Heart right ventricle (tissue), 16 donors: ENCODE measurements at regions of chr20 and their contacts with region 1.

Region 1: DNA sequence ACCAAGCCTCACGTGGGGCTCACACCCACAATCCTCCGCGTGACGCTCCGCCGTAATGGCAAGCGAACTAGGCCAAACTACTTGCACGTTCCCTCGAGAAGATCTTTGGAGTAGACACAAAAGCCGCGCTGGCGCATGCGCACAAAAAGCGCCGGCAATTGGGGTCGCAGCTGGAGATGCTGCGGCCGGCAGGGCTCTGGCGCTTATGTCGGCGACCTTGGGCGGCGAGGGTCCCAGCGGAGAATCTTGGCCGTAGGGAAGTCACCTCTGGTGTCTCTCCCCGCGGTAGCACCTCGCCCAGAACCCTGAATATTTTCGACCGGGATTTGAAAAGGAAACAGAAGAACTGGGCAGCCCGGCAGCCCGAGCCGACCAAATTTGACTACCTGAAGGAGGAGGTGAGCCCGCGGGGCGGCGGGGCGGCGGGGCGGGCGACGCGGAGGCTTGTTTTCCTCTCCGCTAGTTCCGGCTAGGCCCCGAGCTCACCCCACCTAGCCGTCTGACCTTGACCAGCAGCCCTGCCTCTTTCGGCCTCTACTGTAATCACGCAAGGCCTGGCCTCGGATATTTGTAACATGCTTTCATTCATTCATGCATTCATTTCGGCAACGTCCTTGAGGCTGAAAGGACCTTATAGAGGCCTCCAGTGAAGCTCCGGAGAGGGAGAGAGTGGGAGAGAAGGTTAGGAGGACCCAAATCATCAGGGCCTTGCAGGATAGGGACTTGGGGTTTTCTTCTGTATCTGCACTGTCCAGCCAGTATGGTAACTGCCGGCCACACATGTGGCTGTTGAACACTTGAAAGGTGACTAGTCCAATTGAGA is at the starts of genes ESF1 and NDUFAF5:
- DNase-seq: peak; percentile 92 to 95
- ATAC-seq: peak; percentile 98 to 99 (median 99)
- H3K4me3 ChIP-seq: peak within 1 kb of the TSS; percentile 50 to 98 (median 88)
- H3K27ac ChIP-seq: peak within 1 kb of the TSS; percentile 73 to 98 (median 94)
- H3K4me1 ChIP-seq: peaks cover 0 to 46% (median 39%) of the 10 kb centered on the region in 9 donors
- H3K27me3 ChIP-seq: no peaks in the 10 kb centered on the region
- CTCF ChIP-seq: no peak
- total RNA-seq, gene ESF1: 9.9 to 16.4 (median 13.5) TPM
- total RNA-seq, gene NDUFAF5: 47.4 to 83.4 (median 66.3) TPM

Region 2: DNA sequence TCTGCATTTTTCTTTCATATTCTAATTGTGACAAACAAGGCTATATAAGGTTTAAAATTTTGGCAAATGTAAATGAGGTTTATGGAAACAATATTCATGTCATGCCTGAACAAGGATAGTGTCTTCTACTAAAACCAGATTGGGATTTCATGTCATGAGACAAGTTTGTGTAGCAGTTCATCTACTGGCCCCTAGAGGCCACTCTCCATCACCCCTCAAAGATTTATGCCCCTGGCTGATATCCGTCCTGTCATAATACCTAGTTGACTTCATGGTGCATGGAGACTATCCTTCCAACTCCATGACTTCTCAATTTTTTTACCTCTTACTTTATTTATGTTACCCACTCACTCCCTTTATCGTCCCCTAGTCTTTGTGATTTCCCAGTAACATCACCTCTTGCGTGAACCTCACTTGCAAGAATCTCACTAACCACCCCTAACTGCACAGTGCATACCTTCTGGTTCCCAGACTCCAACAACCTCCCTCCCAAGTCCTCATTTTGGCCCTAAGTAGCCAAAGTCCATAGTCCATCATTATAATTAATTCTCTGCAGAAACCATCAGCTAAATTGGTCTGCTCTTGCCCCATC is 326.1 kb before region 1 on chr20:
- intact Hi-C with region 1: loop called in 1 of 10 experiments (anchors 10 kb)
- DNase-seq: no peak
- ATAC-seq: peak in 1 of 8 donors; percentile 58
- H3K4me3 ChIP-seq: no peak overlapping the region
- H3K27ac ChIP-seq: no peak overlapping the region
- H3K4me1 ChIP-seq: peaks cover 0 to 2% (median 0%) of the 10 kb centered on the region in 9 donors
- H3K27me3 ChIP-seq: no peaks in the 10 kb centered on the region
- CTCF ChIP-seq: peak; percentile 35 to 83 (median 72)

Region 3: GRCh38 chr20:13638496-13639222 is 146.4 kb before region 1 on chr20 and contains the start of gene TASP1:
- intact Hi-C with region 1: loop called in 2 of 10 experiments (anchors 5 to 10 kb)
- DNase-seq: peak; percentile 91 to 95
- ATAC-seq: peak; percentile 100
- H3K4me3 ChIP-seq: peak within 1 kb of the TSS; percentile 78 to 98 (median 93)
- H3K27ac ChIP-seq: peak within 1 kb of the TSS in 9 of 10 donors; percentile 34 to 89 (median 68)
- H3K4me1 ChIP-seq: peaks cover 0 to 15% (median 11%) of the 10 kb centered on the region in 9 donors
- H3K27me3 ChIP-seq: peaks cover 0 to 8% (median 0%) of the 10 kb centered on the region in 7 donors
- CTCF ChIP-seq: no peak
- total RNA-seq, gene TASP1: 4.6 to 8.5 (median 6.0) TPM

Region 4: GRCh38 chr20:13723011-13723410 is 62.1 kb before region 1 on chr20:
- intact Hi-C with region 1: loop called in 1 of 10 experiments (anchors 10 kb)
- DNase-seq: no peak
- ATAC-seq: peak in 2 of 8 donors; percentile 27 to 41
- H3K4me3 ChIP-seq: no peak overlapping the region
- H3K27ac ChIP-seq: peak overlapping the region in 1 of 10 donors; percentile 2
- H3K4me1 ChIP-seq: peaks cover 0 to 14% (median 0%) of the 10 kb centered on the region in 9 donors
- H3K27me3 ChIP-seq: no peaks in the 10 kb centered on the region
- CTCF ChIP-seq: no peak

Region 5: DNA sequence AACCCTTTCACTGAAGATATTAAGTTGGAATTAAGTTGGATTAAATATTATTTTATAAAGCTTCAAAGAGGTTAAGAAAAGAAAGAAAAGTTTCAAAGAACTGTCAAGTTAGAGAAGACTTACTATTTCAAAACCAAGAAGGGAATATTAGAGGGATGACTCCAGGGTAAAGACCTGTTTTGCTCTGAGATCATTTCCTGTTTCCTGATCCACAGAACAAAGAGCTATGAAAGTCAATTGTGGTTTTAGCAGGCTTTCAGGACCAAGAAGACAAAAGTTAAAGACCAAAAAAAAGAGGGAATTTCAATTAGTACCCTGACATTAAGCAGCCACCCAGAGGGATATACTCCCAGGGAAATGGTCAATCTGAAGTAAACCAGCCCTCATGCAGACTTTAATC is 19.8 kb before region 1 on chr20:
- intact Hi-C with region 1: no loop called
- DNase-seq: no peak
- ATAC-seq: no peak
- H3K4me3 ChIP-seq: no peak overlapping the region
- H3K27ac ChIP-seq: no peak overlapping the region
- H3K4me1 ChIP-seq: peaks cover 0 to 3% (median 0%) of the 10 kb centered on the region in 9 donors
- H3K27me3 ChIP-seq: no peaks in the 10 kb centered on the region
- CTCF ChIP-seq: no peak

Region 6: GRCh38 chr20:13841206-13841605 is 56.1 kb after region 1 on chr20:
- intact Hi-C with region 1: no loop called
- DNase-seq: no peak
- ATAC-seq: no peak
- H3K4me3 ChIP-seq: no peak overlapping the region
- H3K27ac ChIP-seq: no peak overlapping the region
- H3K4me1 ChIP-seq: no peaks in the 10 kb centered on the region
- H3K27me3 ChIP-seq: peaks cover 0 to 9% (median 0%) of the 10 kb centered on the region in 7 donors
- CTCF ChIP-seq: no peak